Cardiac septum (tissue), 1 donor: ENCODE measurements at regions of chr3 and their contacts with region 1.

Region 1: GRCh38 chr3:60755096-60755495 is 496.2 kb downstream of the FHIT start:
- DNase-seq: no peak

Region 2: GRCh38 chr3:60703956-60704736 is 51.0 kb before region 1 on chr3:
- intact Hi-C with region 1: no loop called
- DNase-seq: no peak

Region 3: GRCh38 chr3:60788185-60788584 is 33.1 kb after region 1 on chr3:
- intact Hi-C with region 1: loop called (anchors 2 kb)
- DNase-seq: no peak